ENCODE measurements at regions of chr13 and their contacts with region 1.

Region 1: DNA sequence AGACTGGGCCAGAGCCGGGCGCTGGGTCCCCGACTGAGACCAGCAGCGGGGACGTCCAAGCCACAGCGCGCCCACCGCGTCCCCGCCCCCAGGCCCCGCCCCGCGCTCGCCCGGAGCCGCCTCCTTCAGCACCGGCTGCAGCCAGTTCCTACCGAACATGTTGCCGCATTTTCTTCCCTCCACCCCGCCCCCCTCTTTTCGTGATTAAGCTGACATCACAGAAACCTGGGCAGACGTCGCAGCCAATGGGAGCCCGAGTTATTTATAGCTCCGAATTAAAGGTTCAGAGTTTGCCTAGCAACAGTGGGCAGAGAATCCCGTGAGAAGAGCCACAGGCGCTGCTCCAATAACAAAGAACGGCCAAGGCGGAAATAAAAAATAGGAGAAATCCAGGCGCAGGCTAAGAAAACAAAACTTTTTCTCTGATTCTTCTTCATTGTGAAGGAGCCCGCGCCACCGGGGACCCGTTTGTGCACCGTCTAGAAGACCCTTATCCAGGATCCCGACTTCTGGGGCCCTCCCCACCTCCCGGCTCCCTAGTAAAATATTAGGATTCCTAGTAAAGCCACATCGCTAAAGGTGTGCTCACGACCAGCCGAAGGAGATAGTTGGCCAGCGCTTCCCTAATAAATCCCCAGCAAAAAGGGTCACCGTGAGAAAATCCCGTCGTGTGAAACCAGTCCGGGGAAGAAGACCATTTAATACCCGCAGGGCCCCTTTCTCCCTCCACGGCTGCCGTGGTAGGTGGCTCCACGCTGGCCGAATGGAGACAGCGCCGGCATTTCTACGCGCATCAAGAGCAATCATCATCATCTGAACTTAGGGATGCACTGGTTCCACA is 61.7 kb downstream of the SERP2 start:
- DNase-seq: peak; percentile 79 to 96 (median 87)
- ATAC-seq: peak; percentile 84
- H3K4me3 ChIP-seq: peak overlapping the region; percentile 57 to 58
- H3K4me3 Mint-ChIP-seq: peak overlapping the region; percentile 89
- H3K27ac ChIP-seq: peak overlapping the region; percentile 49 to 70
- H3K27ac Mint-ChIP-seq: peak overlapping the region; percentile 81
- H3K4me1 ChIP-seq: peaks cover 24% of the 10 kb centered on the region
- H3K4me1 Mint-ChIP-seq: peaks cover 29% of the 10 kb centered on the region
- H3K27me3 ChIP-seq: no peaks in the 10 kb centered on the region
- H3K27me3 Mint-ChIP-seq: peaks cover 5% of the 10 kb centered on the region
- CTCF ChIP-seq: no peak

Region 2: DNA sequence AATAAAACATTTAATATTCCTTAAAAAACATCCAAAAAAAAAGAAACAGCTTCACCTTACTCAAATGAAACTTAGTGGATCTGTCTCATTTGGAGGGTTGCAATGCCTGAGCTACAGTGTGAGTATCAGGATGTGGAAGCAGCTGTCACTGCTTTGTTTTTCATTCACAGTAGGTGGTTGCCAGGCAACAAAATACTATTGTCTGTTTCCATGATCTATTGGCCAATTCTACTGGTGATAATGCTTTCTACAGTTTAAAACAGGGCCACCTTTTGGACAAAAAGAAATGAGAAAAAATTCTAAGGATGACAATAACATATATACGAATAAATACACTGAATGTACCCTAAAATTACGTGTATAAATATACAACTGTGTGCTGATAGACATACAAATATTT is 651.5 kb before region 1 on chr13:
- CTCF ChIA-PET with region 1: no interaction called
- POLR2A ChIA-PET with region 1: no interaction called
- intact Hi-C with region 1: no loop called
- DNase-seq: peak in 1 of 9 experiments; percentile 16
- ATAC-seq: no peak
- H3K4me3 ChIP-seq: no peak overlapping the region
- H3K4me3 Mint-ChIP-seq: no peak overlapping the region
- H3K27ac ChIP-seq: no peak overlapping the region
- H3K27ac Mint-ChIP-seq: no peak overlapping the region
- H3K4me1 ChIP-seq: no peaks in the 10 kb centered on the region
- H3K4me1 Mint-ChIP-seq: peaks cover 16% of the 10 kb centered on the region
- H3K27me3 ChIP-seq: peaks cover 0 to 4% of the 10 kb centered on the region in 2 experiments
- H3K27me3 Mint-ChIP-seq: peaks cover 39% of the 10 kb centered on the region
- CTCF ChIP-seq: no peak

Region 3: DNA sequence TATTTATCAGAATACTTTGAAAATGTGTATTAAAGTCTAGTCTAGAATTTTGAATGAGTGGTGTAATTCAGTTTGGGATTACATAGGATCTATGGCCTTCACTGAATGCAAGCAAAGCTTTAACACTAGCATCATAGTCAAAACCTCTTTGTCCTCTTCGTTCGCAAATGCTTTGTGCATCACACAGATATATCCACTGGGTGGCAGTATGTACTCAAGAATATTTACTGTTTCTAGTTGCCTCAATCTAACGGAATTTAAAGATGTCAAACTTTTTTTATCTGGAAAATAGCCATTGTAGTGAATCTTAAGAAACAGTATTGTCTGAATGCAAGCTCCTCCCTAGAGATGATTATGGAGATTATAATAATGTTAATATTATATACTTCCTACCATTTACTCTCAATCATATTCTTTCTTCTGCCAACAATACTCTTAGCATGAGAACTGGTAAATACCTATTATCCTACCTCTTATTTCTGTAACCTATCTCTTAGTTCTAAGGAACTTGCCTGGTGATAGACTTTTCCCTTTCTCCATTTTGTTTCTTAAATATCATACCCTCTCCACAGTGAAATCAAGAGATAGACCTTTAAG is 529.8 kb before region 1 on chr13:
- CTCF ChIA-PET with region 1: interaction called, 89 read pairs
- POLR2A ChIA-PET with region 1: no interaction called
- intact Hi-C with region 1: loop called (anchors 1 kb)
- DNase-seq: peak in 4 of 9 experiments; percentile 15 to 74 (median 42)
- ATAC-seq: peak; percentile 79
- H3K4me3 ChIP-seq: no peak overlapping the region
- H3K4me3 Mint-ChIP-seq: no peak overlapping the region
- H3K27ac ChIP-seq: no peak overlapping the region
- H3K27ac Mint-ChIP-seq: no peak overlapping the region
- H3K4me1 ChIP-seq: no peaks in the 10 kb centered on the region
- H3K4me1 Mint-ChIP-seq: no peaks in the 10 kb centered on the region
- H3K27me3 ChIP-seq: no peaks in the 10 kb centered on the region
- H3K27me3 Mint-ChIP-seq: peaks cover 14% of the 10 kb centered on the region
- CTCF ChIP-seq: peak; percentile 82

Region 4: GRCh38 chr13:44050450-44051063 is 384.8 kb before region 1 on chr13:
- CTCF ChIA-PET with region 1: interaction called, 7 read pairs
- POLR2A ChIA-PET with region 1: no interaction called
- intact Hi-C with region 1: loop called (anchors 1 kb)
- DNase-seq: peak in 2 of 9 experiments; percentile 55 to 64
- ATAC-seq: peak; percentile 49
- H3K4me3 ChIP-seq: no peak overlapping the region
- H3K4me3 Mint-ChIP-seq: no peak overlapping the region
- H3K27ac ChIP-seq: no peak overlapping the region
- H3K27ac Mint-ChIP-seq: no peak overlapping the region
- H3K4me1 ChIP-seq: no peaks in the 10 kb centered on the region
- H3K4me1 Mint-ChIP-seq: no peaks in the 10 kb centered on the region
- H3K27me3 ChIP-seq: peaks cover 0 to 5% of the 10 kb centered on the region in 2 experiments
- H3K27me3 Mint-ChIP-seq: peaks cover 25% of the 10 kb centered on the region
- CTCF ChIP-seq: peak; percentile 77

Region 5: GRCh38 chr13:44191504-44192171 is 243.7 kb before region 1 on chr13:
- CTCF ChIA-PET with region 1: interaction called, 31 read pairs
- POLR2A ChIA-PET with region 1: interaction called, 4 read pairs
- intact Hi-C with region 1: loop called (anchors 1 to 2 kb)
- DNase-seq: peak in 8 of 9 experiments; percentile 7 to 76 (median 38)
- ATAC-seq: peak; percentile 80
- H3K4me3 ChIP-seq: no peak overlapping the region
- H3K4me3 Mint-ChIP-seq: peak overlapping the region; percentile 40
- H3K27ac ChIP-seq: peak overlapping the region; percentile 5 to 9
- H3K27ac Mint-ChIP-seq: peak overlapping the region; percentile 87
- H3K4me1 ChIP-seq: peaks cover 9% of the 10 kb centered on the region
- H3K4me1 Mint-ChIP-seq: peaks cover 31% of the 10 kb centered on the region
- H3K27me3 ChIP-seq: no peaks in the 10 kb centered on the region
- H3K27me3 Mint-ChIP-seq: no peaks in the 10 kb centered on the region
- CTCF ChIP-seq: peak; percentile 26

Region 6: DNA sequence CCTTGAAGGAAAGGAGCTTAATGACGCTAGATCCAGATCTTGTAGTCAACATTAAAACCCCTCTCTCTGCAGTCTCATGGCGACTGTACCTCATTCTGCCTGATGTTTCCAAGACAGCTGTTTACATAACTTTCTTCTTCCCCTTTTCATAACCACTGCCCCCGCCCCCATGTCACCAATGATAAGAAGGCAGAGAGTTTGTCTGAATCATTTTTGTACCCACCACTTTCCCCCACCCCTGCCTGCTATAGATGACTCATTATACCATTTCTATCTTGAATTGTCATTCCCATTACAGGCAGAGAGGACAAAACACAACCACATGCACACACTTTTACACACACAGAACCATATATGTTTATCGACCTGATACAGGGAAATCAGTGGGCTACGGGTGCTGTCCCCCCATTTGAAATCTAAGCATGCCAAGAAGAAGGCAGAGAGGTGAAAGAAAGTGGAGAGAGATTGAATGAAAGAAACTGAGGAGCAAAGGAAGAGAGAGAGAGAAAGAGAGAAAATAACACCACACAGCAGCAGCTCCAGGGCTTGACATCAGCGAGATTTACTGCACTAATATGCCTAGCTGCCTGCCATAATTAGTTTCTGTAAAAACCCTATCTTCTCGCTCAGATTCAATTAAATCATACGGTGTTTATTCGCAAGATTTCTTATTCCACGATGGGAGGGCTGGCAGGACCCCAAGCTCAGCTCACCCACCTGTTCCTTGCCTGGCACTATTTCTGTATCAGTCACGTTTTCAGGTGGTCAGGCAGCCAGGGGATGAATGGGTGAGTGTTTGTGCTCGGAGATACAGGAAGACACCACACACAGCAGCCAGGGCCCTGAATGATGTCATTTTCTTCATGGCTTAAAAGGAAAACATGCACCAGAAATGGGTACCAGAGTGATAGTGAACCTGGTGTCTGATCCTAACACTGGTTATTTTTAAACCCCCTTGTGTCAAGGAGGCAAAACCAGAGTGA is 176.0 kb before region 1 on chr13:
- CTCF ChIA-PET with region 1: no interaction called
- POLR2A ChIA-PET with region 1: no interaction called
- intact Hi-C with region 1: loop called in 1 of 2 experiments (anchors 5 kb)
- DNase-seq: peak in 8 of 9 experiments; percentile 26 to 84 (median 57)
- ATAC-seq: peak; percentile 83
- H3K4me3 ChIP-seq: no peak overlapping the region
- H3K4me3 Mint-ChIP-seq: peak overlapping the region; percentile 68
- H3K27ac ChIP-seq: no peak overlapping the region
- H3K27ac Mint-ChIP-seq: peak overlapping the region; percentile 89
- H3K4me1 ChIP-seq: peaks cover 11% of the 10 kb centered on the region
- H3K4me1 Mint-ChIP-seq: peaks cover 19% of the 10 kb centered on the region
- H3K27me3 ChIP-seq: no peaks in the 10 kb centered on the region
- H3K27me3 Mint-ChIP-seq: no peaks in the 10 kb centered on the region
- CTCF ChIP-seq: no peak

Region 7: DNA sequence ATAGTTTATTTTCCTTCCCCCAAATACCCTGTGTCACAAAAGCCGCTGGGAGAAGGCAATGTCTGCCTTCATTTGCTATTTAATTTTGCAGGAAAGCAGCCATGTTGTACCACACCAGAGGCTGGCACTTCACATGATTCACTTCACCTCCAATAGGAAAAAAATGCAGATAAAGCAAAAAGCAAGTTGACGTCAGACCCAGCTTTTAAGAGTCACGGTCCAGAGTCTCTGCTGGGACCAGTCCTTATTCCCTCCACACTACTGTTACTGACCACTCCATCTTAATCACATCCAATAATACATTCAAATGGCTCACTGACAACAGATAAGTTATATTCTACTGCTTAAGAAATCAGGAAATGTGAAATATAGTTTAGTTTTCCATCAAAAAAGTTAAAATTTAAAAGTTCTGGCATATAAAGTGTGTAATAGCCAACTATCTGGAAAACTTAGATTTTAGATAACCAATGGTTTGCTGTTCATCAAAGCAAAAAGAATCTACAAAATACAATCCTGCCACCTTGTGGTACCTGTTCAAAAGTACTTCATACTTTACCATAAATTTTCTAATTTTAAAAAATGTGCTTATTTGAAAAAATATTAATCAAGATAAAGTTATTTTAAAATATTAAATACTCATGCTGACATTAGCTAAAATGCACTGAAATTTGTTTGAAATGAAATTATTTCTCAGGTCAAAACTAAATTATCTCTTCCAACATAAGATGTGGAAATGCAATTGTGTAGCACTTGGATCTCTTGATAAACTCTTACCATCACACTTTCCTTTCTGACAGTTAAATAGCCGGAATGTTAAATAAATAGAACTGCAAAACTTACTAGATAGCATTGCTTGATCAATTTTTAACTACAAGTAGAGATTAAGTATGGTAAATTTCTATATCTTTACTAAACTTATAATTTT is 35.5 kb after region 1 on chr13:
- CTCF ChIA-PET with region 1: interaction called, 4 read pairs
- POLR2A ChIA-PET with region 1: no interaction called
- intact Hi-C with region 1: loop called in 1 of 2 experiments (anchors 2 kb)
- DNase-seq: peak in 2 of 9 experiments; percentile 41 to 53
- ATAC-seq: no peak
- H3K4me3 ChIP-seq: no peak overlapping the region
- H3K4me3 Mint-ChIP-seq: no peak overlapping the region
- H3K27ac ChIP-seq: no peak overlapping the region
- H3K27ac Mint-ChIP-seq: no peak overlapping the region
- H3K4me1 ChIP-seq: no peaks in the 10 kb centered on the region
- H3K4me1 Mint-ChIP-seq: peaks cover 3% of the 10 kb centered on the region
- H3K27me3 ChIP-seq: no peaks in the 10 kb centered on the region
- H3K27me3 Mint-ChIP-seq: no peaks in the 10 kb centered on the region
- CTCF ChIP-seq: peak; percentile 47

Measured in CD8-positive, alpha-beta T cell (primary cell).